MCF 10A (cell line): ENCODE measurements at regions of chr16 and their contacts with region 1.

Region 1: DNA sequence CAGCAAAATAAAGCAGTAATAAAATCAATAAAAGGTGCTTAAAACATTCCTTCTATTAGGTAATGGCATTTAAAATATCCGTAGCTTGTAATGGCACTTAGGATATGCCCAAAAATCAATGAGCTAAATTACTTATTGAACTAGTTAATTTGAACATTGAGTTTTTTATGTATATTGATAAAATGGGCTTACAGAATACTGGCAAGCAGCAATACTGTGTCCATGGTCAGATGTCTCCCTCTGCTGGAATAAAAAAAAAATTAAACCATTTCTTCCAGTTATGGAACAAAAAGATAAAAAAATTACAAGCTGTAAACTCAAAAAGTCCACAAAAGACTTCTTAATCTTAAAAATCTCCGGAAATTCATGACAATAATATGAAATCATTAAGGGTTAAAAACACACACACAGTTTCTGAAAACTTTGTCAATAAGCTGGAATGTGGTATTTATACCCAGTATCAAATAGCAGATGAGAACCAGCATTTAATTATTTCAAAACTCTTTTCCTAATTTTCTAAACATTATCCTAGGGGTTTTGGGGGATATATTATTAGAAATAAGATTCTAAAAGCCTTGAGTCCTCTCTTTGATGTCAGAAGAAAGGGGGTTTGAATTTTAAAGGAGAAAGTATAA is 21.5 kb upstream of the PSMD7 start:
- DNase-seq: peak; percentile 24
- H3K4me3 Mint-ChIP-seq: no peak overlapping the region
- H3K27ac Mint-ChIP-seq: no peak overlapping the region
- H3K4me1 Mint-ChIP-seq: no peaks in the 10 kb centered on the region
- H3K27me3 Mint-ChIP-seq: peaks cover 53% of the 10 kb centered on the region
- CTCF ChIP-seq: peak; percentile 59

Region 2: GRCh38 chr16:73565262-73565661 is 709.9 kb before region 1 on chr16:
- CTCF ChIA-PET with region 1: interaction called, 15 read pairs
- POLR2A ChIA-PET with region 1: no interaction called
- intact Hi-C with region 1: loop called (anchors 5 kb)
- DNase-seq: peak; percentile 43
- H3K4me3 Mint-ChIP-seq: no peak overlapping the region
- H3K27ac Mint-ChIP-seq: no peak overlapping the region
- H3K4me1 Mint-ChIP-seq: no peaks in the 10 kb centered on the region
- H3K27me3 Mint-ChIP-seq: peaks cover 94% of the 10 kb centered on the region
- CTCF ChIP-seq: peak; percentile 43

Region 3: GRCh38 chr16:73713778-73714495 is 561.2 kb before region 1 on chr16:
- CTCF ChIA-PET with region 1: interaction called, 4 read pairs
- POLR2A ChIA-PET with region 1: no interaction called
- intact Hi-C with region 1: loop called (anchors 2 kb)
- DNase-seq: peak; percentile 63
- H3K4me3 Mint-ChIP-seq: no peak overlapping the region
- H3K27ac Mint-ChIP-seq: no peak overlapping the region
- H3K4me1 Mint-ChIP-seq: no peaks in the 10 kb centered on the region
- H3K27me3 Mint-ChIP-seq: peaks cover 98% of the 10 kb centered on the region
- CTCF ChIP-seq: peak; percentile 49

Region 4: GRCh38 chr16:73956587-73957494 is 318.3 kb before region 1 on chr16:
- CTCF ChIA-PET with region 1: interaction called, 48 read pairs
- POLR2A ChIA-PET with region 1: no interaction called
- intact Hi-C with region 1: loop called (anchors 10 kb)
- DNase-seq: peak; percentile 65
- H3K4me3 Mint-ChIP-seq: no peak overlapping the region
- H3K27ac Mint-ChIP-seq: no peak overlapping the region
- H3K4me1 Mint-ChIP-seq: no peaks in the 10 kb centered on the region
- H3K27me3 Mint-ChIP-seq: peaks cover 88% of the 10 kb centered on the region
- CTCF ChIP-seq: peak; percentile 82

Region 5: GRCh38 chr16:74064120-74064735 is 210.9 kb before region 1 on chr16:
- CTCF ChIA-PET with region 1: interaction called, 14 read pairs
- POLR2A ChIA-PET with region 1: interaction called, 4 read pairs
- intact Hi-C with region 1: loop called (anchors 1 kb)
- DNase-seq: no peak
- H3K4me3 Mint-ChIP-seq: no peak overlapping the region
- H3K27ac Mint-ChIP-seq: no peak overlapping the region
- H3K4me1 Mint-ChIP-seq: no peaks in the 10 kb centered on the region
- H3K27me3 Mint-ChIP-seq: peaks cover 89% of the 10 kb centered on the region
- CTCF ChIP-seq: peak; percentile 12

Region 6: GRCh38 chr16:74199066-74199841 is 75.9 kb before region 1 on chr16:
- CTCF ChIA-PET with region 1: no interaction called
- POLR2A ChIA-PET with region 1: no interaction called
- intact Hi-C with region 1: no loop called
- DNase-seq: no peak
- H3K4me3 Mint-ChIP-seq: no peak overlapping the region
- H3K27ac Mint-ChIP-seq: no peak overlapping the region
- H3K4me1 Mint-ChIP-seq: no peaks in the 10 kb centered on the region
- H3K27me3 Mint-ChIP-seq: peaks cover 54% of the 10 kb centered on the region
- CTCF ChIP-seq: no peak

Region 7: DNA sequence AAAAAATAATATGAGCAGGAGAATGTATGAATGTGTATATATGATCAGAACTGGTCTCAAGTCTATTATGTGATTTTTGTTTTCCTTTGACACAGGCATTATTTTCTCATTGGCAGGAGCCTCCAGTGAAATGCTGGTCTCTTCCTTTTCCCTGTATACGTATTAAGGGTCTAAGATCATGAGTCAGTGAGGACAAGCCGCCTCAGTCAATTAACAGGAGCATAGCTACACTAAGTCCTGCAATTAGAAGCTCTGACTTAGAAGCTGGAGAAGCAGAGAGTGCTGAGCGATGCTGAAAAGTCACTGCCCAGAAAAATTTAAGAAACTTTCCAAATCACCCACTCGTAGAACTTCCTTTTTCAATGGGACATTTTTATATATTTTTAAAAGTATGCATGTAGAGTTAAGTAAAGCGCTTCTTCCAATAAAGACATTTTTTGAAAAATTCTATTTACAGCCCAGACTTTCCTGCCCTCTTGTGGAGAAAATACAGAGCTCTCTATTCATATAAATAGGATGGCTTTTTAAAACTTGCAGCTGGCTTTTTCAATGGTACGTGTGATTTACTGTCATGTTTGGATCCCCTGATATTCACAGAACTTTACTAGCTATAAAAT is 48.7 kb before region 1 on chr16:
- CTCF ChIA-PET with region 1: interaction called, 26 read pairs
- POLR2A ChIA-PET with region 1: no interaction called
- intact Hi-C with region 1: no loop called
- DNase-seq: peak; percentile 14
- H3K4me3 Mint-ChIP-seq: no peak overlapping the region
- H3K27ac Mint-ChIP-seq: no peak overlapping the region
- H3K4me1 Mint-ChIP-seq: no peaks in the 10 kb centered on the region
- H3K27me3 Mint-ChIP-seq: peaks cover 49% of the 10 kb centered on the region
- CTCF ChIP-seq: peak; percentile 54

Region 8: DNA sequence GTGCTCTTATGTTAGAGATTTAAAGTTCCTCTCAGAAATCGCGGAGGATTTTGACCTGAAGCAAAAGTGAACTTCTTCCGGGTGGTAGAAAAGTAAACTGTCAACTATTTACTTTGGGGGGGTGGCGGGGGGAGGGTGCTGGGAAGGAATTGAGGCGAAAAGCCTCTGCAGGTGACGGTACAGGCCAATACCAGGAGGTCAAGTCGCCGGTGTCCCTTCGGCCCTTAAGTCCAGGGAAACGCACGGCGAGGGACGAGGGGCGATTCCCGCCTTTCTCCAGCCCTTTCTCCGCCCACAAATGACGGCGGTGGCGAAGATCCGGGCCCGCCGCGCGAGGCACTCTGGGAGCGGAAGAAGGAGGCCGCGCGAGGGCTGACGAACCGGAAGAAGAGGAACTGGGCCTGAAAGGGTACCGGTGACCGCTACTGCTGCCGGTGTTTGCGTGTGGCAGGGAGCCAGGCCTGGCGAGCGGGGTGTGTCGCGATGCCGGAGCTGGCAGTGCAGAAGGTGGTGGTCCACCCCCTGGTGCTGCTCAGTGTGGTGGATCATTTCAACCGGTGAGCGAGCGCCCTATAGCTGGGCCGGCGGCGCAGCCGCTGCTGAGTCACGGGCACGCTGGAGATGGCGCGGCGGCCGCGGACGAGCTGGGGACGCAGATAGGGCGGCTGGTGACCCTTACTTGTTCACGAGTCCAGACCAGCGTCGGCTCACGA is 21.5 kb after region 1 on chr16 and contains the start of gene PSMD7:
- CTCF ChIA-PET with region 1: interaction called, 11 read pairs
- POLR2A ChIA-PET with region 1: interaction called, 10 read pairs
- intact Hi-C with region 1: no loop called
- DNase-seq: peak; percentile 92
- H3K4me3 Mint-ChIP-seq: peak within 1 kb of the TSS; percentile 84
- H3K27ac Mint-ChIP-seq: peak within 1 kb of the TSS; percentile 98
- H3K4me1 Mint-ChIP-seq: peaks cover 7% of the 10 kb centered on the region
- H3K27me3 Mint-ChIP-seq: no peaks in the 10 kb centered on the region
- CTCF ChIP-seq: no peak
- total RNA-seq, gene PSMD7: 141 and 172 TPM in 2 replicates

Region 9: DNA sequence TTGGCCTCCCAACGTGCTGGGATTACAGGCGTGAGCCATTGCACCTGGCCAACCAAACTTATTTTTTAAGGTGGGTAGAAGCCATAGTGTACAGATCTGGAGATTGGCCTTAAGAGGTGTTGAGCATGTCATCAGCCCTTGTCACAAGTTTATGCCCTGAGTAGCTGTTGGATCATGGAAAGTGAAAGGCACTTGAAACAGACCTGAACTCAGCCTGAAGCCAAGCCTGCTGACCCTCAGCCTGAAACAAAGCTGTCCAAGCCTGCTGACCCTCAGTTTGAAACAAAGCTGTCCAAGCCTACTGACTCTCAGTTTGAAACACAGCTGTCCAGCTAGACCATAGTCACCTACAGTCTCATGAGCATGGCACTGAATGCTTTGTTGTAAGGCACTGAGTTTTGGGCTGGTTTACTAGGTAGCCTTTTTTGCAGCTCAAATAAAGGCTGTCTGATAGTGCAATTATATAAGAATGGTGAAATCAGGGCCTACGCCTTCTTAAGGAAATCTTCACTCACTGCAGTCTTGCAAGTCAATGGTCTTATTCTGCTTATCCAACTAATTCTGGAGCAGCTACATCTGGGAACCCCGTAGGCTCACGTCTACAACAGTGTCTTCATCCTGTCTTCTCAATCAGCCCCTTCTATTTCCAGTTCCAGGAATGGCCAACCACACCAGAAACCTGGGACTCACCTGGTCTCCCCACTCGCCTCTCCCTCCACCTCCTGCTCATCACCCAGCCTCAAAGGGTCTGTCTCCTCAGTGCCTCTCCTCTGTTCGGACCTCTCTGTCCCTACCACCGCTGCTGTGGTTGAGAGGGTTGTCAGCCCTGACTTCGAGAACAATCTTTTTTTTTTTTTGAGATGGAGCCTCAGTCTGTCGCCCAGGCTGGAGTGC is 98.1 kb after region 1 on chr16:
- CTCF ChIA-PET with region 1: no interaction called
- POLR2A ChIA-PET with region 1: no interaction called
- intact Hi-C with region 1: no loop called
- DNase-seq: no peak
- H3K4me3 Mint-ChIP-seq: no peak overlapping the region
- H3K27ac Mint-ChIP-seq: no peak overlapping the region
- H3K4me1 Mint-ChIP-seq: no peaks in the 10 kb centered on the region
- H3K27me3 Mint-ChIP-seq: no peaks in the 10 kb centered on the region
- CTCF ChIP-seq: no peak

Region 10: DNA sequence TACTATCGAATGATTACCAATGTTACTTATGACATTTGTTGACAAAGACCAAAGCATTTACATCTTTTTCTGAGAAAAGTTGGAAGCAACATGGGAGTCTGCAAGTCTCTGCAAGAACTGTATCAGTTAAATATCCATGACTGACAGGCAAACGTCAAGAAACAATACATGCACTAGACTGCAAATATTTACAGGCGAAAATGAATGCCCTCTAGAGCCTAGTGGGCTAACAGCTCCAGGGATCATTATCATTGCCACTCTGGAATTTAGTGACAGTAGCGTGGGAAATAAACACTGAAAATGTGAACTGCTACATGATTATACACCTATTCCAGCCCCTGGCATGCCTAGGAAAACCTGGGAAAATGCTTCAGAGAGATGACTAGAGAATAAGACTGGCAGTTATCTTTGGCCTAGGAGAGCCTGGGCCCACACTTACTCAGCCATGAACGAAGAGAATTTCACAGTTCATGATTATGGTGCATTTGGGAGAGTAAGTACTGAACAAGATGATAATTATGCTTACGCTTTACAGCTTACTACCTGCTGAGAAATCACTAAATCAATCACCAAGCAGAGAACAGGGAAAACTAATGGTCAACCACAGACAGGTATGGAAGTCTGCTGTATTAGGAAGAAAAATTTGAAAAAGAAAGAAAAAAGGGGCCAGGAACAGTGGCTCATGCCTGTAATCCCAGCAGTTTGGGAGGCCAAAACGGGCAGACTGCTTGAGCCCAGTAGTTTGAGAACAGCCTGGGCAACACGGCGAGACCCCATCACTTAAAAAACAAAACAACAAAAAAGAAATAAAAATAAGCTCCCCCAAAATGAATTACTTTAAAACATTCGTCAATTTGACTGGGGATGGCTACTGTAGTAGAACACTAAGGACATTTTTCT is 212.7 kb after region 1 on chr16:
- CTCF ChIA-PET with region 1: no interaction called
- POLR2A ChIA-PET with region 1: no interaction called
- intact Hi-C with region 1: no loop called
- DNase-seq: no peak
- H3K4me3 Mint-ChIP-seq: no peak overlapping the region
- H3K27ac Mint-ChIP-seq: peak overlapping the region; percentile 29
- H3K4me1 Mint-ChIP-seq: no peaks in the 10 kb centered on the region
- H3K27me3 Mint-ChIP-seq: no peaks in the 10 kb centered on the region
- CTCF ChIP-seq: no peak